ENCODE measurements at regions of chr15 and their contacts with region 1.

Region 1: GRCh38 chr15:50187997-50188396 is 6.0 kb downstream of the SLC27A2 start:
- DNase-seq: no peak
- ATAC-seq: no peak
- H3K4me3 ChIP-seq: no peak overlapping the region
- H3K4me3 Mint-ChIP-seq: no peak overlapping the region
- H3K27ac ChIP-seq: no peak overlapping the region
- H3K27ac Mint-ChIP-seq: no peak overlapping the region
- H3K4me1 ChIP-seq: peaks cover 0 to 5% of the 10 kb centered on the region in 2 experiments
- H3K4me1 Mint-ChIP-seq: peaks cover 6 to 8% (median 7%) of the 10 kb centered on the region in 3 donors
- H3K27me3 ChIP-seq: peaks cover 0 to 4% of the 10 kb centered on the region in 2 experiments
- H3K27me3 Mint-ChIP-seq: peaks cover 11% of the 10 kb centered on the region in 2 donors

Region 2: DNA sequence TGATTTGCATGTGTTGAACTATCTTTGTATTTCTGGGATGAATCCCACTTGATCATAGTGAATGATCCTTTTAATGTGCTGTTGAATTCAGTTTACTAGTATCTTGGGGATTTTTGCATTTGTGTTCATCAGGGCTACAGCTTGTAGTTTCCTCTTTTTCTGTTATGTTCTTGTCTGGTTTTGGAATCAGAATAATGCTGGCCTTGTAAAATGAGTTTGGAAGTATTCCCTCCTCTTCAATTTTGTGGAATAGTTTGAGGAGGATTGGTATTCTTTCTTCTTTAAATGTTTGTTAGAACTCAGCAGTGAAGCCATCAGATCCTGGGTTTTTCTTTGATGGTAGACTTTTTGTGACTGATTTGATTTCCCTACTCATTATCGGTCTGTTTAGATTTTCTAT is 1479.4 kb before region 1 on chr15:
- CTCF ChIA-PET with region 1: no interaction called
- POLR2A ChIA-PET with region 1: interaction called in 1 of 2 experiments, 12 read pairs
- DNase-seq: no peak
- ATAC-seq: no peak
- H3K4me3 ChIP-seq: no peak overlapping the region
- H3K4me3 Mint-ChIP-seq: no peak overlapping the region
- H3K27ac ChIP-seq: no peak overlapping the region
- H3K27ac Mint-ChIP-seq: no peak overlapping the region
- H3K4me1 ChIP-seq: no peaks in the 10 kb centered on the region
- H3K4me1 Mint-ChIP-seq: no peaks in the 10 kb centered on the region
- H3K27me3 ChIP-seq: no peaks in the 10 kb centered on the region
- H3K27me3 Mint-ChIP-seq: no peaks in the 10 kb centered on the region

Region 3: GRCh38 chr15:48992545-48992944 is 1195.5 kb before region 1 on chr15:
- CTCF ChIA-PET with region 1: no interaction called
- POLR2A ChIA-PET with region 1: no interaction called
- DNase-seq: no peak
- ATAC-seq: no peak
- H3K4me3 ChIP-seq: no peak overlapping the region
- H3K4me3 Mint-ChIP-seq: no peak overlapping the region
- H3K27ac ChIP-seq: no peak overlapping the region
- H3K27ac Mint-ChIP-seq: no peak overlapping the region
- H3K4me1 ChIP-seq: no peaks in the 10 kb centered on the region
- H3K4me1 Mint-ChIP-seq: no peaks in the 10 kb centered on the region
- H3K27me3 ChIP-seq: no peaks in the 10 kb centered on the region
- H3K27me3 Mint-ChIP-seq: no peaks in the 10 kb centered on the region

Region 4: DNA sequence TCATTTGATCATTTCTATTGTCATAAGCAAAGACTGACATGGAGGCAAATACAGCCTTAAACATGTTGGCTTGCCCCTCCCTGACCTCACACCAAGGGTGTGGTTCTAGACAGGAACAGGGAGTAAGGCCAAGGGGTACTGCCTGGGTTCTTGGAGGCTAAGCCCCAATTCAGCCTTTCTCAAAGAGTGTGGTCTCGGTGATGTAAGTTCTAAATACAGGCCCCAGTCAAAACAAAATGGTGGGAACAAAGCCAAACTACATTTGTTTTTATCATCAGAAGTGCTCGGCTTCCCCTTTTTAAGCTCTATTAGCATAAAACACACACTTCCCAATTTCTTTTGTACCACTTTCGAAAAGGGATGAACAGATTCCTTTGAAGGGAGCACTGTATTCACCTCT is 198.5 kb before region 1 on chr15:
- CTCF ChIA-PET with region 1: no interaction called
- POLR2A ChIA-PET with region 1: no interaction called
- DNase-seq: no peak
- ATAC-seq: no peak
- H3K4me3 ChIP-seq: no peak overlapping the region
- H3K4me3 Mint-ChIP-seq: no peak overlapping the region
- H3K27ac ChIP-seq: no peak overlapping the region
- H3K27ac Mint-ChIP-seq: no peak overlapping the region
- H3K4me1 ChIP-seq: no peaks in the 10 kb centered on the region
- H3K4me1 Mint-ChIP-seq: no peaks in the 10 kb centered on the region
- H3K27me3 ChIP-seq: no peaks in the 10 kb centered on the region
- H3K27me3 Mint-ChIP-seq: peaks cover 0 to 4% of the 10 kb centered on the region in 2 donors

Region 5: DNA sequence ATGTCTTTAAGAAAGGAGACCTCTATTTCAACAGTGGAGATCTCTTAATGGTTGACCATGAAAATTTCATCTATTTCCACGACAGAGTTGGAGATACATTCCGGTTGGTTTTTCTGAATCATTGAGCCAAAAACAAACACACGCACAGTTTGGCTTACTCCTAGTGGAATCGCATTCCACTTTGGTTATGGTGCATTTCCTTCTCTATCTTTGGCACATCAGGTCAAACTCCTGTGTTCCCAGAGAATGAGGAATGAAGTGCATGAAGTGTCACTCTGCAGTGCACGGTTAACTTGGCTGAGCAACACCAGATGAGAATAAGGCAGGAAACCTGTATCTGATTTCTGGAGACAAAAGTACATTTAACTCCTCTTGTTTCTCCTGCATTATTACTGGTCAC is 39.1 kb after region 1 on chr15:
- CTCF ChIA-PET with region 1: no interaction called
- POLR2A ChIA-PET with region 1: no interaction called
- DNase-seq: no peak
- ATAC-seq: no peak
- H3K4me3 ChIP-seq: no peak overlapping the region
- H3K4me3 Mint-ChIP-seq: no peak overlapping the region
- H3K27ac ChIP-seq: no peak overlapping the region
- H3K27ac Mint-ChIP-seq: no peak overlapping the region
- H3K4me1 ChIP-seq: no peaks in the 10 kb centered on the region
- H3K4me1 Mint-ChIP-seq: no peaks in the 10 kb centered on the region
- H3K27me3 ChIP-seq: no peaks in the 10 kb centered on the region
- H3K27me3 Mint-ChIP-seq: no peaks in the 10 kb centered on the region

Region 6: GRCh38 chr15:50828610-50829219 is 640.7 kb after region 1 on chr15:
- CTCF ChIA-PET with region 1: no interaction called
- POLR2A ChIA-PET with region 1: no interaction called
- DNase-seq: no peak
- ATAC-seq: no peak
- H3K4me3 ChIP-seq: no peak overlapping the region
- H3K4me3 Mint-ChIP-seq: no peak overlapping the region
- H3K27ac ChIP-seq: no peak overlapping the region
- H3K27ac Mint-ChIP-seq: no peak overlapping the region
- H3K4me1 ChIP-seq: no peaks in the 10 kb centered on the region
- H3K4me1 Mint-ChIP-seq: no peaks in the 10 kb centered on the region
- H3K27me3 ChIP-seq: no peaks in the 10 kb centered on the region
- H3K27me3 Mint-ChIP-seq: peaks cover 5 to 10% of the 10 kb centered on the region in 2 donors

Measured in T-cell (primary cell).